Prostate gland (tissue), 2 donors: ENCODE measurements at regions of chr3 and their contacts with region 1.

Region 1: DNA sequence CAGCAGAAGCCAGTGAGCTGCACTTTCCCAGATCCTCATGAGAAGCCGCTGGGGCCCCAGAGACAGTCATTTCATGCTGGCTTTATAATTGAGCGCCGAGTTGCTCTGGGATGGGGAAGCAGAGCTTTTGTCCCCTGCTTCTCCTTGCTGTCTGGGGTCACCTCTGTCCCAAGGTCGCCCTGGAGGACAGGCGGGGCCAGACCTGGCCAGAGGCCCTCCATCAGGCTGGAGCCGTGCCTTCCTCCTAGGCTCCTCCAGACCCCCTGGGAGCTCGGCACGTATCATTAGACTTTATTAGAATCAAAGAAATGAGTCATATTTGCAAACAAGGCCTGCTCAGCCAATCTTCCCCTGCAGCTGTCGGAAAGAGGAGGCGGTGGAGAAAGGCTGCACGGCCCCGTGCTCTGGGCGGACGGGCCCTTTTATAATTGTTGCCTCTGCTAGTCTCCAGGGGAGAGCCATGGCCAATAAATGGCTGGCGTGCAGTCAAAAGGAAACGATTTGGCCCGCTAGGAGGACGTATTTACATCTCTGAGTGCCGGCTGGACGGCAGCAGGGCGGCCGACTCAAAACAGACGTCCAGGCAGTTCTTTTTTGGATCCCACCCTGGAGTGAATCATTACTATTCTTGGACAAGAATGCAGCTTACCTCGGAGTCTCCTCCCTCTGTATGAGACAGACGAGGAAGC is 50.4 kb downstream of the SLC6A6 start:
- DNase-seq: peak; percentile 95
- H3K4me3 ChIP-seq: no peak overlapping the region
- H3K27ac ChIP-seq: peak overlapping the region; percentile 57 to 63
- H3K4me1 ChIP-seq: peaks cover 8% of the 10 kb centered on the region
- H3K27me3 ChIP-seq: no peaks in the 10 kb centered on the region
- CTCF ChIP-seq: peak in 3 of 4 experiments; percentile 17 to 52 (median 37)
- POLR2A ChIP-seq: peak; percentile 22

Region 2: GRCh38 chr3:14124615-14125190 is 328.1 kb before region 1 on chr3 and contains the starts of genes CHCHD4 and TMEM43:
- intact Hi-C with region 1: loop called (anchors 10 kb)
- DNase-seq: peak; percentile 99
- H3K4me3 ChIP-seq: peak within 1 kb of the TSS; percentile 74 to 77
- H3K27ac ChIP-seq: peak within 1 kb of the TSS; percentile 89 to 90
- H3K4me1 ChIP-seq: peaks cover 20% of the 10 kb centered on the region
- H3K27me3 ChIP-seq: no peaks in the 10 kb centered on the region
- CTCF ChIP-seq: peak in 2 of 4 experiments; percentile 27 to 35
- POLR2A ChIP-seq: peak; percentile 85
- total RNA-seq, gene CHCHD4: 12.1 to 14.8 TPM
- total RNA-seq, gene TMEM43: 56.8 to 80.5 TPM

Region 3: DNA sequence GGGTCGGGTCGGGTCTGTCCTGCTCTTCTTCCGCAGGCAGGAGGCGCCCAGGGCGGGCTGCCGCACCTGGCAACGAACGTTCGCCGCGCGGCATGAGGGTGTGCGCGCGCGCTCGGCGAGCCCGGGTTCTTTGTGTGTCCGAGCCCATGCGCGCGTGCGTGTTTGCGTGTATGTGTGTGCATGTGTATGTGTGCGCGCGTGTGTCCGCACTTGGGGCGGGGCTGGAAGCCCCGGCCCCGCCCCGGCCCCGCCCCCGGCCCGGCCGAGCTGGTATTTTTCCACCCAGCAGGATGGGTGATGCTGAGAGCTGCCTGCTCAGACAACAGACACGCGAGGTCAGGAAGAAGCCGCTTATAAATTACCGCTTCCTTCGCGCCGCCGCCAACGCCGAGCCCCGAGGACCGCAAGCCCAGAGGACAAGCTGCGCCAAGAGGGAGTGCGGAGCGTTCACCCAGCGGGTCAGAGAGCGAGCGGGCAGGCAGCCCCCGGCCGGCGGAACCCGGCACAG is 50.5 kb before region 1 on chr3 and contains the start of gene SLC6A6:
- intact Hi-C with region 1: loop called (anchors 5 kb)
- DNase-seq: peak; percentile 95
- H3K4me3 ChIP-seq: peak within 1 kb of the TSS; percentile 46 to 50
- H3K27ac ChIP-seq: peak within 1 kb of the TSS; percentile 75 to 79
- H3K4me1 ChIP-seq: peaks cover 11% of the 10 kb centered on the region
- H3K27me3 ChIP-seq: no peaks in the 10 kb centered on the region
- CTCF ChIP-seq: peak in 3 of 4 experiments; percentile 64 to 74 (median 71)
- POLR2A ChIP-seq: peak; percentile 37
- total RNA-seq, gene SLC6A6: 6.9 to 24.5 TPM

Region 4: DNA sequence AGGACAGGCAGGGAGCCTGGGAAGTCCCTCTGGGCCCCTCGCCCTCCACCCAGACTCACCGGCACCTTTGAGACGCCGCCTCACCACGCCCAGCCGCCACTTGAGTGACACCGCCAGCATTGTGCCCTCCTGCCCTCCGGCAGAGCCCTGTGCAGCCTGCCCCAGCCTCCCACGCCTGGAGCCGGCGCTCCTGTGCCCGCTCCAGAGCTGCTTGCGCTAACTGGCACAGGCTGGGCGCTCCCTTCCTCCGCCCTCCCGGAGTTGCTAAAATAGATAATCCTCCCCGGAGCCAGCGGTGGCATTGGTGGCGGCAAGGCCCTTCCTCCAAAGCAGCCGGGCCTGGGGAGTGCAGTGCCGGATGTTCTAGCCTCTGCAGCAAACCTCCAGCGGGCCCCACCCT is 103.0 kb after region 1 on chr3:
- intact Hi-C with region 1: no loop called
- DNase-seq: no peak
- H3K4me3 ChIP-seq: no peak overlapping the region
- H3K27ac ChIP-seq: no peak overlapping the region
- H3K4me1 ChIP-seq: no peaks in the 10 kb centered on the region
- H3K27me3 ChIP-seq: no peaks in the 10 kb centered on the region
- CTCF ChIP-seq: no peak
- POLR2A ChIP-seq: no peak